ENCODE measurements at regions of chr1 and their contacts with region 1.

Region 1: GRCh38 chr1:24642481-24643361 is at the start of gene SRRM1:
- DNase-seq: peak; percentile 100
- H3K4me3 ChIP-seq: peak within 1 kb of the TSS; percentile 97
- H3K27ac ChIP-seq: peak within 1 kb of the TSS; percentile 99
- H3K4me1 ChIP-seq: peaks cover 10% of the 10 kb centered on the region
- H3K27me3 ChIP-seq: no peaks in the 10 kb centered on the region
- CTCF ChIP-seq: peak; percentile 27; the same call in 1 of the 2 replicates
- total RNA-seq, gene SRRM1: 185 and 193 TPM in 2 replicates

Region 2: DNA sequence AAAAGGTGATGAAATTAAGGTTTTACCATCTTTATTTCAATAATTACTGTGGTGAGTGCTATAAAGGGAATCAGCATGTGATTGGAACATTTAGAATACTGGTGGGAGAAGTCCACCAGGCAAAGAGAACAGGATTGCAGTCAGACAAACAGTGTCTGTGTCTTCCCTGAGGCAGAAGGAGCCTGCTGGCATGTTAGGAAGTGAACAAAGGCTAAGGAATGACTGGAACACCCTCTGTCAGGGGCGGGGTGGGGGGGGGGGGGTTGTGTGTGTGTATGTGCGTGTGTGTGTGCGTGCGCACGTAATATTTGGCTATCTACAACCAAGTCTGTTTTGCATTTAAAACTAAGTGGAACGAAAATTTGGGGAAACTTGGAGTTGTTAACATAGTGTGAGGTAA is 30.6 kb after region 1 on chr1:
- CTCF ChIA-PET with region 1: no interaction called
- POLR2A ChIA-PET with region 1: interaction called, 10 read pairs
- intact Hi-C with region 1: no loop called
- DNase-seq: no peak
- H3K4me3 ChIP-seq: no peak overlapping the region
- H3K27ac ChIP-seq: no peak overlapping the region
- H3K4me1 ChIP-seq: no peaks in the 10 kb centered on the region
- H3K27me3 ChIP-seq: no peaks in the 10 kb centered on the region
- CTCF ChIP-seq: no peak

Region 3: GRCh38 chr1:24987875-24988557 is 345.3 kb after region 1 on chr1:
- CTCF ChIA-PET with region 1: no interaction called
- POLR2A ChIA-PET with region 1: no interaction called
- intact Hi-C with region 1: no loop called
- DNase-seq: no peak
- H3K4me3 ChIP-seq: no peak overlapping the region
- H3K27ac ChIP-seq: no peak overlapping the region
- H3K4me1 ChIP-seq: no peaks in the 10 kb centered on the region
- H3K27me3 ChIP-seq: no peaks in the 10 kb centered on the region
- CTCF ChIP-seq: no peak